ENCODE measurements at regions of chr4 and their contacts with region 1.

Region 1: GRCh38 chr4:182738283-182739047 is 178.7 kb downstream of the DCTD start:
- DNase-seq: no peak

Region 2: DNA sequence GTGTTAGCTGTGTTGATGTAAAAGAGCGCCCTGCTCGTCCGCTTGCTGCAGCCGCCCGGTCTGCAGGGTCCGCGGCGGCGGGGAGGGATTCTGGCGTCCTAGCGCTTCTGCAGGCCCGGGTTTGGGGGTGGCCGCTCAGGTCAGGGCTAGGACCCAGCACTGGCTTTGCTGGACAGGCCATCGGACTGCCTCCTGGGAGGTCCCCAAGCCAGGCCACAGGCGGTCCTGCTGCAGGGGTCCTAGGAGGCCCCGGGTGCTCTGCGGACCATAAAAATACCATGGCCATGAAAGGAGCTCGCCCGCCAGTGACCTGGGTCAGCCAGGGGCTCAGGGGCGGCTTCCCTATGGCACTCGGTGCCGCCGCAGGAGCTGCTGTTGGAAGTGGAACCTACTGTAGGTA is 129.9 kb before region 1 on chr4:
- intact Hi-C with region 1: no loop called
- DNase-seq: no peak

Region 3: GRCh38 chr4:182700362-182701160 is 37.9 kb before region 1 on chr4:
- intact Hi-C with region 1: no loop called
- DNase-seq: no peak

Region 4: DNA sequence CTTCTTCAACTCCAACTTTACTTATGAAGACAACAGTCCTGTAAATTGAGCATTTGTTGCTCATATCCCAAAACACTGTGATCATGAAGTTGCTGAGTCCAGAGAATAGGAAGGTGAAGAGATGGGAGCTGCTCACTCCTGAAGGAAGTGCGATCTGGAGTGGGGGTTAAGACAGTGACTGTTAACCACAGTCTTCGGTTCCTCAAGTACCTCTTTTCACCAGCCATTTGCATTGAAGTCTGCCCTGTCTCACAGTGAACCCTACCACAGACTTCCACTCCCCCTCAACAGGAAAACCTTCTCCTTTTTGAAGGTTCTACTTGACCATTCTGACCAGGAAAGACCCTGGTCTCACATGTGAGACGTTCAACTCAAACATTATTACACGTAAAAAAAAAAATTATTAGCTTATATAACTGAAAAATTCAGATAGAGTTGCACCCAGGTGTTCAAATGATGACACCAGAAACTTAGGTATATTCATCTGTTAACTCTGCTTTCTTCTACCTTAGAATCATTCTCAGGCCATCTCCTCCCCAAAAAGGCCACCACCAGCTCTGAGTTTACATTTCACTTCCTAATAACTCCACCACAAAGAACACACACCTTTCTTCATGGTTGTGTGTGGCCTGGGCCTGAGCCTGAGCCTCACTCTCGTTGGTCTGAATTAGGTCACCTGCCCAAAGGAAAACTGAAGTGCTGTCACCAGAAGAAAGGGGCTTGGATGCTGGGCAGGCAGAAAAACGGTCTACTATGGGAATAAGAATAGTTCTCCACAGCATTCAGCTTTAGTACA is 20.5 kb before region 1 on chr4:
- intact Hi-C with region 1: loop called (anchors 1 kb)
- DNase-seq: no peak

Region 5: DNA sequence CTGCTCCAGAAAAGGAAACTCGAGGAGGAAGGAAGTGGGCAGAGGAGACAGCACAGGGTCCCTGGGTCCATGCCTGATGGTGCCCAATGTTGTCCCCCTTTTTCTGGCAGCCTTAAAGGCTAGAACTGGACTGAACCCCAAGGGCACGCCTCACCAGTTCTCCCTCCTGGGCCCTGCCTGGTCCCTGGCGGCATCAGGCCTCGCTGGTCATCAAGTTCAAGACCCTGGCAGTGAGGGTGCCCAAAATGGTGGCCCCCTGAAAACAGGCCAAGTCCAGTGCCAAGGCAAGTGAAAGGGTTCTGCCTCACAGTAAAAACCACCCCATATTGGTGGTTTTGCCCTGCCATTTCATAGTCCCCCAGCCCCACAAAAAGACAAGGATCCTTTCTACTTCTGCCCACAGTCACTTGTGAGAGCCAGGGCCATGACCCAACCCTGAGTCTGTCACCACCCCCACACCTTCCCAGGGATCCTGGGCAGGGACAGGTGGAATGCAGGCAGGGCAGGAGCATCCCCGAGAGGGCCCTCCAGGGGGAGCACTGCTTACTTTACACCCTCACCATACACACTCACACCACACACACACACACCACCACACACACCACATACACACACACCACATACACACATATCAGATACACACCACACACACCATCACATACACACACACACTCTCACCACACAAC is 71.1 kb after region 1 on chr4:
- intact Hi-C with region 1: no loop called
- DNase-seq: no peak

Region 6: DNA sequence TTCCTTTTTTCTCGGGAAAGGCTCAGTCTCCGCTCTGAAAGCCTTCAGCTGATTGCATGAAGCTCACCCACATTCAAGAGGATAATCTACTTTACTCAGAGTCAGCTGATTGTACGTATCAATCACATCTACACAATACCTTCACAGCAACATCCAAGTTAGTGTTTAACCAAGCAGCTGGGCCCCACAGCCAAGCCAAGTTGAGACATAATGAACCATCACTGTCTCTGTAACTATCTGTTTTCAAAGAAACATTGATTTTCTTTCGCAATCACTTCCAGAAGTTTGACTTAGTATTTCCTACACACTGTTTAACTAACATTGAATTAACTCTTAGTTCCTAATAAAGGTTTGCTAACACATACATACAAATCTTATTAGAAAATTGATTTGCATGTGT is 880.2 kb after region 1 on chr4:
- intact Hi-C with region 1: no loop called
- DNase-seq: no peak

Measured in cardiac septum (tissue), 1 donor.